B cell (primary cell): ENCODE measurements at regions of chr16 and their contacts with region 1.

Region 1: GRCh38 chr16:31202414-31203375 is at the start of gene PYCARD:
- DNase-seq: no peak
- ATAC-seq: peak; percentile 34
- H3K4me3 ChIP-seq: peak within 1 kb of the TSS; percentile 59 to 86 (median 78)
- H3K4me3 Mint-ChIP-seq: peak within 1 kb of the TSS; percentile 92
- H3K27ac ChIP-seq: peak within 1 kb of the TSS; percentile 62 to 73
- H3K27ac Mint-ChIP-seq: peak within 1 kb of the TSS; percentile 95
- H3K4me1 ChIP-seq: peaks cover 32 to 48% of the 10 kb centered on the region in 2 donors
- H3K4me1 Mint-ChIP-seq: peaks cover 55% of the 10 kb centered on the region
- H3K27me3 ChIP-seq: no peaks in the 10 kb centered on the region
- H3K27me3 Mint-ChIP-seq: no peaks in the 10 kb centered on the region
- CTCF ChIP-seq: no peak
- total RNA-seq, gene PYCARD: 31.8 and 35.7 TPM in 2 replicates

Region 2: GRCh38 chr16:31105677-31106213 is 97.0 kb before region 1 on chr16:
- CTCF ChIA-PET with region 1: no interaction called
- POLR2A ChIA-PET with region 1: no interaction called
- intact Hi-C with region 1: no loop called
- DNase-seq: peak; percentile 83
- ATAC-seq: peak; percentile 94
- H3K4me3 ChIP-seq: peak overlapping the region in 2 of 5 experiments; percentile 18 to 28
- H3K4me3 Mint-ChIP-seq: peak overlapping the region; percentile 65
- H3K27ac ChIP-seq: no peak overlapping the region
- H3K27ac Mint-ChIP-seq: peak overlapping the region; percentile 46
- H3K4me1 ChIP-seq: peaks cover 7 to 18% of the 10 kb centered on the region in 2 donors
- H3K4me1 Mint-ChIP-seq: peaks cover 21% of the 10 kb centered on the region
- H3K27me3 ChIP-seq: no peaks in the 10 kb centered on the region
- H3K27me3 Mint-ChIP-seq: no peaks in the 10 kb centered on the region
- CTCF ChIP-seq: peak; percentile 81

Region 3: GRCh38 chr16:31117391-31118197 is 85.1 kb before region 1 on chr16 and contains the start of gene KAT8:
- CTCF ChIA-PET with region 1: no interaction called
- POLR2A ChIA-PET with region 1: interaction called, 11 read pairs
- intact Hi-C with region 1: no loop called
- DNase-seq: peak; percentile 98
- ATAC-seq: peak; percentile 94
- H3K4me3 ChIP-seq: peak within 1 kb of the TSS; percentile 49 to 83 (median 66)
- H3K4me3 Mint-ChIP-seq: peak within 1 kb of the TSS; percentile 92
- H3K27ac ChIP-seq: peak within 1 kb of the TSS; percentile 72 to 95
- H3K27ac Mint-ChIP-seq: peak within 1 kb of the TSS; percentile 96
- H3K4me1 ChIP-seq: peaks cover 10 to 20% of the 10 kb centered on the region in 2 donors
- H3K4me1 Mint-ChIP-seq: peaks cover 15% of the 10 kb centered on the region
- H3K27me3 ChIP-seq: no peaks in the 10 kb centered on the region
- H3K27me3 Mint-ChIP-seq: no peaks in the 10 kb centered on the region
- CTCF ChIP-seq: no peak
- total RNA-seq, gene KAT8: 100.0 and 102 TPM in 2 replicates

Region 4: DNA sequence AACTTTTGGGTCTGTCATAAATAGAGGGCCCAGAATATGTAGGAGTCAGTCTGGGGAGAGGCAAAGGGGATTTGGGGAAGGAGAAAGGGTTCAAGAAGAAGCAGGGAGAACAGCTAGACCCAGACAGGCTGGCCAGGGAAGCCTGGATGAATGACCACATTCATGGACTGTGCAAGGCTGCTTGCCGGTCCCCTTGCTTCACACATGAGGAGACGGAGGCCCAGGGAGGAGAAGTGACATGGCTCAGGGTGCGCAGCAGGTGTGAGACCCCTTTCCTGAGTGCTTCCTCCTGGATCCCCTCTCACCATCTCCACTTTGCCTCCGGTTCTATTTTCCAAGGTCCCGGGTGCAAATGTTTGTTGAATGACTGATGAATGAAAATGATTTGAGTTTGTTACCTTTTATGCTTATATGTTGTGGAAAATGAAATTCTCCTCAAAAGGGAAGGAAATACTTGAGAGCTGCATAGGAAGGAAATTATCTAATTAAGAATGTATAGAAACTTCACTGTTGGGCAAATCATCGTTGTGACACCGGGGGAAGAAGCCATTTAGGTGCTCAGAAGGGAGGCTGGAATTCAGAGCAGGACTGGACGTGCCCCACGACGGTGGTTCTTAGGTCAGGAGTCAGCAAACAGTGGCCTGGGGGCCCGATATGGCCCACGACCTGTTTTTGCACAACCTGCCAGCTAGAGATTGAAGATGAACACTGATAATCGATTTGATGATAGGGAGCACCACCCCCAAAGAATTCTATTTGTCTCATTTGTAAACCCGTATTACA is 57.6 kb after region 1 on chr16:
- CTCF ChIA-PET with region 1: interaction called, 3 read pairs
- POLR2A ChIA-PET with region 1: interaction called, 4 read pairs
- intact Hi-C with region 1: loop called (anchors 5 kb)
- DNase-seq: peak; percentile 27
- ATAC-seq: peak; percentile 28
- H3K4me3 ChIP-seq: peak overlapping the region; percentile 36 to 61 (median 60)
- H3K4me3 Mint-ChIP-seq: peak overlapping the region; percentile 89
- H3K27ac ChIP-seq: peak overlapping the region in 1 of 2 donors; percentile 30
- H3K27ac Mint-ChIP-seq: peak overlapping the region; percentile 90
- H3K4me1 ChIP-seq: peaks cover 50 to 69% of the 10 kb centered on the region in 2 donors
- H3K4me1 Mint-ChIP-seq: peaks cover 51% of the 10 kb centered on the region
- H3K27me3 ChIP-seq: no peaks in the 10 kb centered on the region
- H3K27me3 Mint-ChIP-seq: no peaks in the 10 kb centered on the region
- CTCF ChIP-seq: no peak

Region 5: DNA sequence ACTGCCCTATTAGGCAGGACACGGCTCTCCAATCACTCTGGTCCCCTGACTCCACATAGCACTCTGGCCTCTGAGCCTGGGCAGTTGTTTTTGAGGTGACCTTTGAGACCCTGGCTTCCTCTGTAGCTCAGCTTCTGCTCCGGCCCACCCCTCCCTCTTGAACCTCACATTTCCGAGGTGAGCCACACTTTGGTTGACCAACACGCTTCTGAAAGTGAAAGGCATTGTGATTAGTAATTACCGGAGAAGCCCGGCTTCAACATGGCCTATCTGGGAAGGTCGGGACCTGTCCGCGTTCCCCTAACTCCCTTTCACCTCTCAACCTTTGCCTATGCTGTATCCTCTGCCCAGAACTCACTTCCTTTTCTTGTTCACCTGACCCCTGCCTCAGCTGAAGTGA is 142.0 kb after region 1 on chr16:
- CTCF ChIA-PET with region 1: no interaction called
- POLR2A ChIA-PET with region 1: no interaction called
- intact Hi-C with region 1: loop called (anchors 5 kb)
- DNase-seq: no peak
- ATAC-seq: no peak
- H3K4me3 ChIP-seq: no peak overlapping the region
- H3K4me3 Mint-ChIP-seq: peak overlapping the region; percentile 49
- H3K27ac ChIP-seq: no peak overlapping the region
- H3K27ac Mint-ChIP-seq: peak overlapping the region; percentile 77
- H3K4me1 ChIP-seq: peaks cover 18 to 34% of the 10 kb centered on the region in 2 donors
- H3K4me1 Mint-ChIP-seq: peaks cover 41% of the 10 kb centered on the region
- H3K27me3 ChIP-seq: no peaks in the 10 kb centered on the region
- H3K27me3 Mint-ChIP-seq: no peaks in the 10 kb centered on the region
- CTCF ChIP-seq: no peak

Region 6: GRCh38 chr16:31440516-31441184 is 238.0 kb after region 1 on chr16:
- CTCF ChIA-PET with region 1: interaction called, 3 read pairs
- POLR2A ChIA-PET with region 1: no interaction called
- intact Hi-C with region 1: loop called (anchors 5 kb)
- DNase-seq: no peak
- ATAC-seq: no peak
- H3K4me3 ChIP-seq: no peak overlapping the region
- H3K4me3 Mint-ChIP-seq: no peak overlapping the region
- H3K27ac ChIP-seq: no peak overlapping the region
- H3K27ac Mint-ChIP-seq: no peak overlapping the region
- H3K4me1 ChIP-seq: peaks cover 11 to 12% of the 10 kb centered on the region in 2 donors
- H3K4me1 Mint-ChIP-seq: peaks cover 19% of the 10 kb centered on the region
- H3K27me3 ChIP-seq: peaks cover 0 to 6% (median 2%) of the 10 kb centered on the region in 4 experiments
- H3K27me3 Mint-ChIP-seq: peaks cover 3% of the 10 kb centered on the region
- CTCF ChIP-seq: no peak